BJ (cell line): ENCODE measurements at regions of chr3 and their contacts with region 1.

Region 1: GRCh38 chr3:50611464-50612233 is at the start of gene CISH:
- DNase-seq: peak; percentile 67
- H3K4me3 ChIP-seq: peak within 1 kb of the TSS; percentile 68
- H3K27me3 ChIP-seq: no peaks in the 10 kb centered on the region
- CTCF ChIP-seq: peak; percentile 60
- polyA plus RNA-seq, gene CISH: 1.1 and 2.6 TPM in 2 replicates

Region 2: DNA sequence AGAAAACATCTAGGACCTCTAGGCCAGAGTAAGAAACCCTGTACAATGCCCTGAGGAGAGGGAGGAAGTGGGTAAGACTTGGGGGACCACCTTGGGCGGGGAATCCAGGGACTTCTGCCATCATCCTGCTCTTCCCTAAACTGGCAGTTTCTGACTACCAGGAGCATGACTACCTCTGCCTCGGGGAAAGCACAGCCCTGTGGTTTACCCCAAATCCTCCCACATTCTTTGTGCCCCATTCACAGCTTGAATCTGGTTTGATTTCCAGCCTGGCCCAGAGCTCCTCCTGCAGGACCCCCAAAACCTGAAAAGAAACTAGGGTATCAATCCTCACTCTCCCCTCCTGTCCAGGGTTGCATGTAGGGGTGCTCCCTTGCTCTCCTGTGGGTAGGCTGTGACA is 48.8 kb before region 1 on chr3:
- CTCF ChIA-PET with region 1: interaction called, 479 read pairs
- POLR2A ChIA-PET with region 1: no interaction called
- DNase-seq: peak; percentile 58
- H3K4me3 ChIP-seq: no peak overlapping the region
- H3K27me3 ChIP-seq: no peaks in the 10 kb centered on the region
- CTCF ChIP-seq: peak; percentile 28; the same call in 1 of the 2 replicates

Region 3: DNA sequence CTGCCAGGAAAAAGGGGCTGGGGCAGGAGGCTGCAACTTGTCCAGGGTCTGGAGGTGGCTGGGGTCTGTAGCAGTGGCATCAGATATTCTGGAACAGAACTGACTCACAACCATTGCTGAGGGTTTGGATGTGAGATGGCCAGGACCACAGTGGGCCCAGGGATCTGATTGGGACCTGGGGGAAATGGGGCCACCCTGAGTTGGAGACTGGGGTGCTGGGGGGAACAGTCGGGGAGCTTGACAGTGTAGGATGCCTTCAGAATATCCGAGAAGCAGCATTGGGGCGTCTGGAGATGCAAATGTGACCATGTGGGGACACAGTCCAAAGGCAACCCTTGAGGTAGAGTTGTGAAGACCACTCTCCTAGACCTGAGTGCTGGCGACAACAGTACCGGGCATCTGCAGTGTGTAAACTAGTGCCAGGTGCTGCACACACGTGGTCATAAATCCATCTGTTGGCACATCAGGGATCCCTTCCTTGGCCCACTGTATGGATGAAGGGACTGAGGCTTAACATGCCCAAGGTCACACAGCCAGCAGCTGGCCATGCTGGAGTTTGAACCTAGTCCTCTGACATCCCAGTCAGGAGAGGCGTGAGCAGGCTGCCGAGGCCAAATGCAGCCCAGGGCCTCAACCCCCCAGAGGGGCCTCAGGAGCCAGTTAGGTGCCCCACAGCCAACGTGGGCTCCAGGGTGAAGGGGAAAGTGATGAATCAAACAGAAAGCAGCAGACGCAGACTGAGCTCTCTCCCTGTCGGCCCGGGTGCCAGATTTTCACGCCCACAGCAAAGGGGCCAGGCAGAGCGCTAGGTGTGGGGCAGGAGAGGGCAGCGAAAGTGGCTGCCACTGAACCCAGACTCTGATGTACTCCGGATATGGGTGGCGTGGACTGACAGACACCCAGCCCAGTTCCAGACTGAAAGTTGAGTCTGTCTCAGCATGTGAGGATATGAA is 23.6 kb before region 1 on chr3:
- CTCF ChIA-PET with region 1: interaction called, 106 read pairs
- POLR2A ChIA-PET with region 1: no interaction called
- DNase-seq: no peak
- H3K4me3 ChIP-seq: no peak overlapping the region
- H3K27me3 ChIP-seq: no peaks in the 10 kb centered on the region
- CTCF ChIP-seq: no peak

Region 4: GRCh38 chr3:50627407-50628051 is 15.9 kb after region 1 on chr3:
- CTCF ChIA-PET with region 1: interaction called, 13 read pairs
- POLR2A ChIA-PET with region 1: no interaction called
- DNase-seq: no peak
- H3K4me3 ChIP-seq: no peak overlapping the region
- H3K27me3 ChIP-seq: no peaks in the 10 kb centered on the region
- CTCF ChIP-seq: peak; percentile 58

Region 5: GRCh38 chr3:51099794-51100535 is 488.3 kb after region 1 on chr3:
- CTCF ChIA-PET with region 1: interaction called, 26 read pairs
- POLR2A ChIA-PET with region 1: no interaction called
- DNase-seq: peak; percentile 6
- H3K4me3 ChIP-seq: no peak overlapping the region
- H3K27me3 ChIP-seq: no peaks in the 10 kb centered on the region
- CTCF ChIP-seq: peak; percentile 89

Region 6: DNA sequence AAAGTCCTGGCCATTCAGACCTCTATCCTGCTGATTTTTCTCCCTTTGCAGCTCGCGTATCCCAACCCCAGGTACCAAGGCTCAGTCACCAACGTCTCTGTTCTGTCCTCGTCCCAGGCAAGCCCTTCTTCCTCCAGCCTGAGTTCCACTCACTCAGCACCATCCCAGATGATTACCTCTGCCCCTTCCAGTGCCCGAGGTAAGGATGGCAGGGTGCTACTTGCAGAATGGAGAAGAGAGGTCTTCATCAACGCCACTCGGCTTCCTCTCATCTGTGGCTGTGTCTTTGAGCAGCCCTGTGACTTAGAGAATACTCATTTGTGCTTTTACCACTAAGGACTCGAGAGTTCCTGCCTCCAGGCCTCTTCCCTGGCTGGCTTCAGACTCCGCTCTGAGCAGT is 750.8 kb after region 1 on chr3:
- CTCF ChIA-PET with region 1: interaction called, 11 read pairs
- POLR2A ChIA-PET with region 1: no interaction called
- DNase-seq: no peak
- H3K4me3 ChIP-seq: no peak overlapping the region
- H3K27me3 ChIP-seq: peaks cover 2% of the 10 kb centered on the region; the same call in 1 of the 2 replicates
- CTCF ChIP-seq: no peak

Region 7: DNA sequence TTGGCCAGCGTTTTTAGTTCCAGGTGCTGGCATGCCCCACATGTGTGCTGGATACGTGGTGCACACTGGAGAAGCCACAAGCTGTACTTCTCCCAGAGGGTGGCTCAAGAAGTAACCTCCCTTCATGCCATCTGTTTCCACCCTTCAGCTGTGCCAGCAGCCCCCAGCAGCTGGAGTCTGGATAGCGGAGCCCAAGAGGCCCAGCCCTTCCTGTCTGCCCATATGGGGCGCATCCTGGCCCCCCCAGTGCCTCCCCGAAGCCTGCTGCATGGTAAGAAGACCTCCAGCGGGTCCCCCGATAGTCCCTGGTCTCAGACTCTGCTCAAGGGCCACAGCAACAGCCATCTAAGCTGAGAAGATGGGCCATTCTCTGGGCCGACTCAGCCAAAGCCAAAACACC is 767.7 kb after region 1 on chr3:
- CTCF ChIA-PET with region 1: interaction called, 14 read pairs
- POLR2A ChIA-PET with region 1: no interaction called
- DNase-seq: no peak
- H3K4me3 ChIP-seq: no peak overlapping the region
- H3K27me3 ChIP-seq: no peaks in the 10 kb centered on the region
- CTCF ChIP-seq: no peak